ENCODE measurements at regions of chr5 and their contacts with region 1.

Region 1: DNA sequence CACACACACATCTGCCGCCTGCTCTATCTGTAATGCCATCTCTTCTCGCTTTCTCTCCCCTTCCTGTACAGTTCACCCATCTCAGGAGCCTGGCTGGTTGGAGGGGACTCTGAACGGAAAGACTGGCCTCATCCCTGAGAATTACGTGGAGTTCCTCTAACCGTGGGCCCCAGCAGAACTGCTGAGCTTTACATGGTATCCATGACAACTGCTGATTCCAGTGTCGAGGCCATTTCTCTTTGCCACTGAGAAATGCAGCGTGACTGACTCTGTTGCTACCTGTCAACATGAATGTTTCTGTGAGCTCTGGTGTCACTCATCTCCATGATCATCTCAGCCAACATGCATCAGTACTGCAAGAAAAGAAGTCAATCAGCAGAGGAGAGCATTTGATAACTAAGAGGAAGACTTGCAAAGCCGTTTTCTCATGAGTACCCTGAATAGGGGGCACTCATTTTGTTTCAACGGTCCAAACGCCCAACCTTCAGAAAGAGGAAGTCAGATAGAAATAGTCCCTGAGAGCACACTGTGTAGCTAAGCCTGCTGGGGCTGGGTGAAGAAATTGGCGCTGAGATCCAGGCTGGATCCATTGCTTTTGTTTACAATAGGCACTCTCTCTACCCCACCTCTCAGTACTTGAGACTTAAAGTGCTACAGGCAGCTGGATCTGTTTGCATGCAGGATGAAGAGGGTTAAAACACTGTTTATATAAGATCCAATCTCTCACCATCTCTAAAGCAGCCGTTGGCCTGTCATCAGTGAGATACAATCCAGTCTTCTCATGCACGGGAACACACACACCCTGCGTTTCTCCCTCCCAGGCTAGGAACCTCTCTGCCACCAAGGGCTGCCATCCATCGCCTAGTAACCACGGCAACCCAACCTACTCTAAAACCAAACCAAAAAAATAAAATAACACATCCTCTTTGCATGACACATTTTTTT is 180.9 kb downstream of the NR3C1 start:
- DNase-seq: peak; percentile 62
- ATAC-seq: peak; percentile 74
- H3K4me3 Mint-ChIP-seq: peak overlapping the region; percentile 6
- H3K27ac Mint-ChIP-seq: peak overlapping the region; percentile 81
- H3K4me1 Mint-ChIP-seq: peaks cover 43% of the 10 kb centered on the region
- H3K27me3 Mint-ChIP-seq: no peaks in the 10 kb centered on the region
- CTCF ChIP-seq: no peak

Region 2: GRCh38 chr5:143033535-143034250 is 188.9 kb before region 1 on chr5:
- CTCF ChIA-PET with region 1: interaction called, 3 read pairs
- POLR2A ChIA-PET with region 1: no interaction called
- intact Hi-C with region 1: loop called (anchors 5 kb)
- DNase-seq: no peak
- ATAC-seq: no peak
- H3K4me3 Mint-ChIP-seq: no peak overlapping the region
- H3K27ac Mint-ChIP-seq: peak overlapping the region; percentile 11
- H3K4me1 Mint-ChIP-seq: peaks cover 75% of the 10 kb centered on the region
- H3K27me3 Mint-ChIP-seq: no peaks in the 10 kb centered on the region
- CTCF ChIP-seq: no peak

Measured in activated CD8-positive, alpha-beta T cell treated with anti-CD3 and anti-CD28 coated beads for 36 hours (primary cell).